Dendritic cell treated with granulocyte-macrophage colony-stimulating factor and Interleukin-4, amounts not matched to agents 40 ng/mL and 50 ng/mL, for 4 days (primary cell): ENCODE measurements at regions of chr16 and their contacts with region 1.

Region 1: GRCh38 chr16:10509534-10510025 is 70.8 kb downstream of the EMP2 start:
- H3K4me3 Mint-ChIP-seq: no peak overlapping the region
- H3K27ac Mint-ChIP-seq: no peak overlapping the region
- H3K4me1 Mint-ChIP-seq: peaks cover 11% of the 10 kb centered on the region
- H3K27me3 Mint-ChIP-seq: no peaks in the 10 kb centered on the region

Region 2: DNA sequence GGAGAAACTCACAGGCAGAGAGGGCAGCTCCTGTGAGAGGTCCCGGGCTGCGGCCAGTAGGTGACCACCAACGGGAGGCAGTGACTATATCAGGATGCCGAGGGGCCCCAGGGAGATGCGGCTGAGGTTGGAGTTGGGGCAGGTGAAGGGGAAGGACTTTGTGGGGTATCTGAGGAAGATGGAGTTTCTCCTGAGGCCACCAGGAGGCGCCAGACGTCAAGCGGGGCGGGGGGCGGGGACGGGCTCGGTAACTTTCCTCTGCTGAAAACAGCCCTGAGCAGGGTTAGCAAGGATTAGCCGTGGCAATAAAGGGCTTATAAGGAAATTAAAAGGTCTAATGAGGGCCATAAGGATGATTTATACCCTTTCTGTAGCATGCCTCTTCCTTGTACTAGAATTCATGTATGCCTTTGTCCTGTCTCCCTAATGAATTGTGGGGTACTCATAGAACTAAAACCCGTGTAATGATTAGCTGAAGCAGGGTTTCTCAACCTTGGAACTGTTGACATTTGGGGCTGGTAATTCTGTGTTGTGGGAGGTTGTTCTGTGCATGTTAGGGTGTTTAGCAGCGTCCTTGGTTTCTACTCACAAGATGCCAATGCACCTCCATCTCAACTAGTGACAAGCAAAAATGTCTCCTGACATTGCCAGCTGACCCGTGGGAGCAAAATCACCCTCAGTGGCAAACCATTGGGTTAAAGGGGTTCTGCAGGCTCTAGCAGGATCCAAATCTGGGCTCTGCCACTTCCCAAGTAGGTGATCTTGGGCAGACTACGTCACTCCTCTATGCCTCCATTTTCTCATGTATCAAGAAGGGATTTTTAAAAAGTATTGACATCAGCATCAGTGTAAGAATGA is 252.6 kb before region 1 on chr16:
- intact Hi-C with region 1: loop called (anchors 1 kb)
- H3K4me3 Mint-ChIP-seq: no peak overlapping the region
- H3K27ac Mint-ChIP-seq: no peak overlapping the region
- H3K4me1 Mint-ChIP-seq: peaks cover 10% of the 10 kb centered on the region
- H3K27me3 Mint-ChIP-seq: peaks cover 2% of the 10 kb centered on the region

Region 3: DNA sequence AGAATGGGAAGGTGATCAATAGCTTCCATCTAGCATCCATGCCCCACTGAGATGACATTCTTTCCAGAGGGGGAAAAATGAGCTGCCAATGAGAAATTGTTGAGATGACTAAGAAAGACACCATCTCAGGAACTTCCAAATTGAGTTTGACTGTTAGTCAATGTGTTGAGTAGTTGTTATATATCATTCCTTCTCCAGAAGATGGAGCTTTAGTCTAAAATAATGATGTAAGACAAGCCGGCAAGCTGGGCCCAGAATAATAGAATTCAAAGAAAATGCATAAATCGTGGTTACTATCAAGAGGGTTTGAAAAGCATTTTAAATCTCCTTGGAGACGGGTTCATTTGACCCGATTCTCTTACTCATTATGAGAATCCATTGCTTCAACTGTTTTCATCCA is 194.8 kb before region 1 on chr16:
- intact Hi-C with region 1: loop called (anchors 2 kb)
- H3K4me3 Mint-ChIP-seq: no peak overlapping the region
- H3K27ac Mint-ChIP-seq: no peak overlapping the region
- H3K4me1 Mint-ChIP-seq: no peaks in the 10 kb centered on the region
- H3K27me3 Mint-ChIP-seq: no peaks in the 10 kb centered on the region

Region 4: DNA sequence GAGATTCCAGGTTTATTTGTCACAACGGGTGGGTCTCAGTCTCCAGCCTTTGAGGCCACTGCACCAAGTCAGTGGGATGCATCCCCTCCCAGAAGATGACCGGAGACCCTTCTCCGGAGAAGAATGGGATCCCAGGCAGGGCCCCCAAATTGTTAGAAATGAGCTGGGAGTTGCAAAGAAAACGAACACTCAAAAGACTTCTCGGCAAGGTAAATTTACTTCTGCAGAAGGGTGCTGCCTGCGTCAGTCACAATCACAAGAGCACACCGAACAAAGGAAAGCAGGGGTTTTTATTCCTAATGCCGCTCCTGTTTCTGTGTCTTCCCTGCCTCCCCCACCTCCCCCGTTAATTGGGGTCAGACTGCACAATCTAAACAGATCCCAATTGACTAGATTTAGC is 62.3 kb before region 1 on chr16:
- intact Hi-C with region 1: no loop called
- H3K4me3 Mint-ChIP-seq: no peak overlapping the region
- H3K27ac Mint-ChIP-seq: no peak overlapping the region
- H3K4me1 Mint-ChIP-seq: no peaks in the 10 kb centered on the region
- H3K27me3 Mint-ChIP-seq: no peaks in the 10 kb centered on the region

Region 5: DNA sequence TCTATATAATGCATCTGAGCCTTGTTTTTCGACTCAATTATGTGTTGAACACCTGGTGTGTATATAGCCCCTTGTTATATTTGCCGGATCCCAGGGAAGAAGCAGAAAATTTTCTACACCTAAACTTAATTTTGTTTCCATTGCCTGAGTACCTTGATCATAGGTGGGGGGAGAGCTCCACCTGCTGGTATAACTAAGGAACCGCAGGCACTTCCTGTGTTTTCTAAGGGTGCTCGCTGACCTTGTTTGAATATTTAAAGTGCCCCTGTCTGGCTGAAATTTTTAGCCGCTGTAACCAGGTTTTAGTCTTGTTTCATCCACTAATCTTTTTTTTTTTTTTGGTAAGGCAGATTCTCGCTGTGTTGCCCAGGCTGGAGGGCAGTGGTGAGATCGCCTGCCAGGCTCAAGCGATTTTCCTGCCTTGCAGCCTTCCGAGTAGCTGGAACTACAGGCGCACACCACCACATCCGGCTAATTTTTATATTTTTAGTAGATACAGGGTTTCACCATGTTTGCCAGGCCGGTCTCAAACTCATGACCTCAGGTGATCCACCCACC is 227.6 kb after region 1 on chr16:
- intact Hi-C with region 1: loop called (anchors 1 kb)
- H3K4me3 Mint-ChIP-seq: peak overlapping the region; percentile 66
- H3K27ac Mint-ChIP-seq: peak overlapping the region; percentile 76
- H3K4me1 Mint-ChIP-seq: peaks cover 37% of the 10 kb centered on the region
- H3K27me3 Mint-ChIP-seq: no peaks in the 10 kb centered on the region